ENCODE measurements at regions of chr11 and their contacts with region 1.

Region 1: DNA sequence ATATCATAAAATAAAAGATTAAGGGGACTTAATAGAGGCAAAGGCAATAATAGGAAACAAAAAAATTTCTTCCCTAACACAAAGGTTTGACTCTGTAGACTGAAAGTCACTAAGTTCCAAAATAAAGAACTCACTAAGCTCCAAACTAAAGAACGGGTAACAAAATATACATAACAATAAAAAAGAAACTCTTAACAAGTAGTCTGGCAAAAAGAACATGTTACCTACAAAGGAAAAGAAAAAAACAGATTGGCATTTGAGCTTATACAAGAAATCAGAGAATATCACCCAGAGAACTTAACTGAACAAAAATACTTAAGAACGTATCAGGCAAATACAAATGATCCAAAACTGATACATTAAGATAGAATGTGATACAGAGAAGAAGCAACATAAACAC is 7.5 kb downstream of the ARHGAP32 start:
- DNase-seq: no peak
- H3K4me3 ChIP-seq: no peak overlapping the region
- H3K4me3 Mint-ChIP-seq: no peak overlapping the region
- H3K27ac Mint-ChIP-seq: no peak overlapping the region
- H3K4me1 ChIP-seq: peaks cover 3% of the 10 kb centered on the region
- H3K4me1 Mint-ChIP-seq: peaks cover 7% of the 10 kb centered on the region
- H3K27me3 ChIP-seq: no peaks in the 10 kb centered on the region
- H3K27me3 Mint-ChIP-seq: no peaks in the 10 kb centered on the region
- CTCF ChIP-seq: no peak

Region 2: GRCh38 chr11:129167315-129167714 is 17.3 kb before region 1 on chr11:
- CTCF ChIA-PET with region 1: no interaction called
- POLR2A ChIA-PET with region 1: no interaction called
- intact Hi-C with region 1: loop called (anchors 1 kb)
- DNase-seq: no peak
- H3K4me3 ChIP-seq: no peak overlapping the region
- H3K4me3 Mint-ChIP-seq: no peak overlapping the region
- H3K27ac Mint-ChIP-seq: no peak overlapping the region
- H3K4me1 ChIP-seq: no peaks in the 10 kb centered on the region
- H3K4me1 Mint-ChIP-seq: peaks cover 7% of the 10 kb centered on the region
- H3K27me3 ChIP-seq: no peaks in the 10 kb centered on the region
- H3K27me3 Mint-ChIP-seq: no peaks in the 10 kb centered on the region
- CTCF ChIP-seq: no peak